Right cardiac atrium (tissue), 5 donors: ENCODE measurements at regions of chr11 and their contacts with region 1.

Region 1: GRCh38 chr11:93543292-93543977 is at the start of gene SMCO4:
- DNase-seq: peak; percentile 90 to 96 (median 94)
- ATAC-seq: peak; percentile 95
- H3K4me3 ChIP-seq: peak within 1 kb of the TSS; percentile 79
- H3K27ac ChIP-seq: peak within 1 kb of the TSS; percentile 76
- H3K4me1 ChIP-seq: peaks cover 3% of the 10 kb centered on the region
- H3K27me3 ChIP-seq: no peaks in the 10 kb centered on the region
- total RNA-seq, gene SMCO4: 31.8 to 95.6 (median 59.8) TPM

Region 2: GRCh38 chr11:93487032-93487483 is 56.4 kb before region 1 on chr11:
- intact Hi-C with region 1: loop called in 1 of 4 experiments (anchors 10 kb)
- DNase-seq: no peak
- ATAC-seq: peak; percentile 31 to 57
- H3K4me3 ChIP-seq: no peak overlapping the region
- H3K27ac ChIP-seq: no peak overlapping the region
- H3K4me1 ChIP-seq: no peaks in the 10 kb centered on the region
- H3K27me3 ChIP-seq: no peaks in the 10 kb centered on the region